Sigmoid colon (tissue), 7 donors: ENCODE measurements at regions of chr12 and their contacts with region 1.

Region 1: DNA sequence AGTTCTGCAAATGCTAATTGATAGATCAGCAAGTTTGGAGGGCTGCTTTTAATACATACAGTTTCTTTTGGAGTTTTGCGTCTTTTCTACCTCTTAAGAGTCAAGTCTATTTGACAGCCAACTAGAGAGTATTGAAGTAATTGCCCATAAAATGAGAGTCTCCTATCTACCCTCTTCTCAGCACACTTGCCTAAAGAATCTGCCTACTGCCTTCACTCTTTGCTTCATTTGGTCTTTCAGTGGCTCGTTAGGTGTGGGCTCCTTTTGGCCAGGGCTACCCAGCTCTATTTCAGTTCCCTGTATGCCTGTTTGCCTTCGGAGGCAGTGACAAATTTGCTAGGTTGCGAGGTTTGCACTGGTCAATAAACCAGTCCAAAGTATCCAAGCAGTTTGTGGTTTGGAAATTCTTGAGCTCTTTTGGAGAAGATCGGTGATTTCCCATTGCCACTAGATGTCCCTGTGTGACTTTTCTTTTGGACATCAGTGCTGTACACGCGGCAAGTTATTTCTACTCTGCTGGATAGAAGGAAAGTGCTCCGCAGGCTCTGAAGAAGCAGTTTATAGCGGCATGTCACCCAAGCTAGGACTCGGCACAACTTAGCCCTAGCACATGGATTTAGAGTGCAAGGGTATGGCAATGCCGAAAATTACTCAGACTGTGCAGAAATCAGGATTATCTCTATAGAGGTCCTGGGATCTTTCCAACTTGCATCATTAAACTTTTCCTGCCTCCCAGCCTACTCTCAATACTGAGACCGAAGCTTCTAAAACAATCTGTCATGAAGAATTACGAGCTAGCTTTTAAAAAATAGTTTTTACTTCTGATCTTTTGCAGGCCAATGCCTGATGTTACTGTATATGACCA is 38.6 kb downstream of the MGST1 start:
- DNase-seq: peak; percentile 68
- H3K4me3 ChIP-seq: peak overlapping the region in 3 of 4 donors; percentile 18 to 34 (median 24)
- H3K27ac ChIP-seq: peak overlapping the region in 3 of 4 donors; percentile 21 to 62 (median 58)
- H3K4me1 ChIP-seq: peaks cover 0 to 14% (median 9%) of the 10 kb centered on the region in 4 donors
- H3K27me3 ChIP-seq: no peaks in the 10 kb centered on the region
- CTCF ChIP-seq: peak; percentile 36 to 49 (median 42)
- EP300 ChIP-seq: no peak
- POLR2A ChIP-seq: no peak

Region 2: GRCh38 chr12:16437281-16437861 is 51.4 kb after region 1 on chr12:
- intact Hi-C with region 1: no loop called
- DNase-seq: no peak
- H3K4me3 ChIP-seq: no peak overlapping the region
- H3K27ac ChIP-seq: no peak overlapping the region
- H3K4me1 ChIP-seq: no peaks in the 10 kb centered on the region
- H3K27me3 ChIP-seq: no peaks in the 10 kb centered on the region
- CTCF ChIP-seq: no peak
- EP300 ChIP-seq: no peak
- POLR2A ChIP-seq: no peak

Region 3: DNA sequence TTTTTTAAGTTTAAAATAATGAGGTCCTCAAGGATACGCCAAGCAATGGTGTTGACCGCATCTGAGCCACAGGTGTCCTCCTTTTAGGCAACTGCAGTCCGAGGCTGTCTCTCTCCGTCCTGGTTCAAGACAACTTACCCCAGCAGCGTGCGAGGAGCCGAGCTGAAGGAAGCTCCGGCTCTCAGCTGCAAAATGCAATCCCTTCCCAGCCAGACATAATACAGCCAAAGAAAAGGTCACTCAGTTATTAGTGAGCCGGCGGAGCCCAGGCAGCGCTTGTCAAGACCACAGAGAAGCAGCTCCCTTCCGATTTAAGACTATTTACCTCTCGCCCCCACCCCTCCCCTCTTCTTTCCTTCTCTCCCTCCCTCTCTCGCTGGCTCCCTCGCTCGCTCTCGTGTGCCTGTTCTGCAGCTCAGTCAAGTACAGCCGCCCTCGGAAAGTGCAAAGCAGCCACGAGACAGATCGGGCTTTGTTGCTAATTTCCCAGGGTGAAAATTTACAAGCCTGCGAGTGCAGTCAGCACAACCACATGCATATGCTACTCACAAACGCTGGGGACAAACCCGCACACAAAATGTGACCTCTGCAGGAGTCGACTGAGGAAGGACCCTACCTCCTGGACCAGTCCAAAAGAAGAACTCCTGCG is 220.3 kb after region 1 on chr12:
- intact Hi-C with region 1: loop called (anchors 2 kb)
- DNase-seq: peak; percentile 84
- H3K4me3 ChIP-seq: peak overlapping the region; percentile 50 to 67 (median 56)
- H3K27ac ChIP-seq: peak overlapping the region; percentile 84 to 91 (median 84)
- H3K4me1 ChIP-seq: peaks cover 0 to 18% (median 5%) of the 10 kb centered on the region in 4 donors
- H3K27me3 ChIP-seq: no peaks in the 10 kb centered on the region
- CTCF ChIP-seq: no peak
- EP300 ChIP-seq: no peak
- POLR2A ChIP-seq: peak in 1 of 2 donors; percentile 45

Region 4: GRCh38 chr12:16685107-16685506 is 299.1 kb after region 1 on chr12:
- intact Hi-C with region 1: loop called (anchors 10 kb)
- DNase-seq: no peak
- H3K4me3 ChIP-seq: no peak overlapping the region
- H3K27ac ChIP-seq: no peak overlapping the region
- H3K4me1 ChIP-seq: no peaks in the 10 kb centered on the region
- H3K27me3 ChIP-seq: no peaks in the 10 kb centered on the region
- CTCF ChIP-seq: peak in 1 of 4 experiments; percentile 13
- EP300 ChIP-seq: no peak
- POLR2A ChIP-seq: no peak

Region 5: GRCh38 chr12:17642340-17642650 is 1256.3 kb after region 1 on chr12:
- intact Hi-C with region 1: loop called (anchors 5 kb)
- DNase-seq: no peak
- H3K4me3 ChIP-seq: peak overlapping the region in 1 of 4 donors; percentile 41
- H3K27ac ChIP-seq: no peak overlapping the region
- H3K4me1 ChIP-seq: peaks cover 0 to 4% (median 0%) of the 10 kb centered on the region in 4 donors
- H3K27me3 ChIP-seq: no peaks in the 10 kb centered on the region
- CTCF ChIP-seq: no peak
- EP300 ChIP-seq: no peak
- POLR2A ChIP-seq: no peak